AG04450 (cell line): ENCODE measurements at regions of chr22 and their contacts with region 1.

Region 1: GRCh38 chr22:35231585-35232084 is 25.7 kb upstream of the HMGXB4 start:
- DNase-seq: peak; percentile 11
- H3K4me3 ChIP-seq: no peak overlapping the region
- H3K27ac ChIP-seq: no peak overlapping the region
- H3K27me3 ChIP-seq: peaks cover 9% of the 10 kb centered on the region
- CTCF ChIP-seq: peak; percentile 91

Region 2: GRCh38 chr22:35219012-35219411 is 12.6 kb before region 1 on chr22:
- CTCF ChIA-PET with region 1: interaction called, 17 read pairs
- POLR2A ChIA-PET with region 1: no interaction called
- DNase-seq: peak; percentile 7
- H3K4me3 ChIP-seq: no peak overlapping the region
- H3K27ac ChIP-seq: no peak overlapping the region
- H3K27me3 ChIP-seq: no peaks in the 10 kb centered on the region
- CTCF ChIP-seq: no peak

Region 3: DNA sequence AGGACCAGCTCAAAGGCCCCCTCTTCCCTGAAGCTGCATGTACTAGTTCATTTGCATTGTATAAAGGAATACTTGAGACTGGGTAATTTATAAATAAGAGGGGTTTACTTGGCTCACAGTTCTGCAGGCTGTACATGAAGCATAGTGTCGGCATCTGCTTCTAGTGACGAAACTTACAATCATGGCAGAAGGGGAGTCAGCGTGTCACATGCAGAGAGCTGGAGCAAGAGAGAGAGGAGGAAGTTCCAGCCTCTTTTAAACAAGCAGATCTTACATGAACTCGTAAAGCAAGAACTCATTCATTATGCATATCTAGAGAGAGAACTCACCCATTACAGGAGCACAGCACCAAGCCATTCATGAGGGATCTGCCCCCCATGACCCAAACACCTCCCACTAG is 18.5 kb after region 1 on chr22:
- CTCF ChIA-PET with region 1: interaction called, 14 read pairs
- POLR2A ChIA-PET with region 1: no interaction called
- DNase-seq: no peak
- H3K4me3 ChIP-seq: no peak overlapping the region
- H3K27ac ChIP-seq: no peak overlapping the region
- H3K27me3 ChIP-seq: peaks cover 5% of the 10 kb centered on the region
- CTCF ChIP-seq: no peak